ENCODE measurements at regions of chr2 and their contacts with region 1.

Region 1: GRCh38 chr2:72887754-72888437 is 688 bp downstream of the SPR start:
- DNase-seq: peak; percentile 83
- H3K4me3 ChIP-seq: peak overlapping the region; percentile 66 to 79 (median 75)
- H3K27ac ChIP-seq: no peak overlapping the region
- H3K4me1 ChIP-seq: peaks cover 13% of the 10 kb centered on the region
- H3K27me3 ChIP-seq: no peaks in the 10 kb centered on the region
- CTCF ChIP-seq: peak; percentile 95 to 97

Region 2: DNA sequence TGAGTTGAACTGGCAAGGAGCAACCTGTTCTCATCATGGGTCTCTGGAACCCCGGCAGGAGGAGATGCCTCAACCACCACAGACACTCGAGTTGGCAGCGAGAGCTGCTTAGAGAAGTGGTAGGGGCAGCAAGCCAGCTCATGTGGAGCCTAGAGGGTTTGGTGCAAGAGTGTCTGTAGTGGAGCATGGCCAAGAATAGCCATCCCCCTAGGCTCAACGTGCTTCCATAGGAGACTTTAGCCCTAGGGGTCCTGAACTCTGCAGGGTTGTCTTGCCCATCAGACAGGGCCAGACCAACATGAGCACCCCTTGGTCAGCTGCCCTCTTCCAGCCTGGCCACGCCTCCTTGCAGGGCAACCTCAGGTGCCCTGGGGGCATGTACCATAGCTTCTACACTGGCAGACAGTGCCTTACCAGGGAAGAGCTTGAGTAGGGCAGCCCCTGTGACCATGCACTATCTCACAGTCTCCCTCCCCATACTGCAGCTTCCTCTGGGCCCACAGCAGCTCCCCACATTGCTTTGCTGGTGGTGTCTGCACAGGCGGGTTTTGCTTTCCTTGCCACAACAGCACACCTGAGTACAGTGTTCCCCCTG is 249.2 kb before region 1 on chr2:
- CTCF ChIA-PET with region 1: no interaction called
- dilution Hi-C with region 1: no loop called
- in situ Hi-C with region 1: no loop called
- intact Hi-C with region 1: no loop called
- DNase-seq: no peak
- H3K4me3 ChIP-seq: no peak overlapping the region
- H3K27ac ChIP-seq: no peak overlapping the region
- H3K4me1 ChIP-seq: no peaks in the 10 kb centered on the region
- H3K27me3 ChIP-seq: no peaks in the 10 kb centered on the region
- CTCF ChIP-seq: no peak

Region 3: GRCh38 chr2:72770879-72771461 is 116.9 kb before region 1 on chr2:
- CTCF ChIA-PET with region 1: interaction called, 5 read pairs
- dilution Hi-C with region 1: no loop called
- in situ Hi-C with region 1: no loop called
- intact Hi-C with region 1: loop called (anchors 1 kb)
- DNase-seq: peak; percentile 60
- H3K4me3 ChIP-seq: no peak overlapping the region
- H3K27ac ChIP-seq: no peak overlapping the region
- H3K4me1 ChIP-seq: peaks cover 6% of the 10 kb centered on the region
- H3K27me3 ChIP-seq: no peaks in the 10 kb centered on the region
- CTCF ChIP-seq: peak; percentile 74 to 82

Region 4: GRCh38 chr2:72915907-72916742 is 28.2 kb after region 1 on chr2:
- CTCF ChIA-PET with region 1: no interaction called
- dilution Hi-C with region 1: no loop called
- in situ Hi-C with region 1: no loop called
- intact Hi-C with region 1: loop called (anchors 2 kb)
- DNase-seq: peak; percentile 57
- H3K4me3 ChIP-seq: peak overlapping the region; percentile 27 to 37 (median 31)
- H3K27ac ChIP-seq: no peak overlapping the region
- H3K4me1 ChIP-seq: peaks cover 38% of the 10 kb centered on the region
- H3K27me3 ChIP-seq: peaks cover 74% of the 10 kb centered on the region
- CTCF ChIP-seq: no peak

Region 5: DNA sequence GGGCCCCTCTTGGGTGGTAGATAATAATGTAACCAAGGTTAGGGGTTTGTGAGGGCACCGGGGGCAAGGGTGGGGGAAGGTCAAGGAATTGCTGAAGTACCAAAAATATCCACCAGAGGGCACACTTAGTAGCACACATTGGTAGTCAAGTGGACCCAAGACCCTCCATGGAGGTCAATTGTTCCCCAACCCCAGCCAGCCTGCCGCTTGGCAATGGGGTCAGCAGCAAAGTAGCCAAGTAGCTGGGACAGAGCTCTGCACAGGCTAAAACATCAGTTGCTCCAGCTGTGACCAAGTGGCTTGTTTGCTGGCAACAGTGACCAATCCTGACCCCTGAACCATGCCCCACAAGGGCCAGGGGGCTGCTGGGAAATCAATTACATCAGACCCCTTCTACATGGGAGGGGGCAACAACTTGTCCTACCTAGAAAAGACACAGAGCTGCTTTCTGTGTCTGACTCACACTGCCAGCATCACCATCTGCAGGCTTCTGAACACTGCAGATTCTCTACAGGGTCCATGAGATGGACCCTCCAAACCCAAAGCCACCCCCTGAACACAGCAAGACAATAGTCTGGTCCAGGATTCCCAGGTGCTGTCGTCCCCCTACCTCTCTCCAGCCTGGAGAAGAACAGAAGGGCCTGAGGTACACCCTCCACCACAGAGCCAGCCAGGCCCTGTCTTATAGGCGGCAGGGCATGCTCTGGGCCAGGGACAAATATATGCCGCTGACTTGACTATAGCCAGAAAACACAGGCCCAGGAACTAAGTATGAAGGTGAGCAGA is 105.4 kb after region 1 on chr2:
- CTCF ChIA-PET with region 1: no interaction called
- dilution Hi-C with region 1: no loop called
- in situ Hi-C with region 1: no loop called
- intact Hi-C with region 1: loop called (anchors 5 kb)
- DNase-seq: no peak
- H3K4me3 ChIP-seq: no peak overlapping the region
- H3K27ac ChIP-seq: no peak overlapping the region
- H3K4me1 ChIP-seq: no peaks in the 10 kb centered on the region
- H3K27me3 ChIP-seq: no peaks in the 10 kb centered on the region
- CTCF ChIP-seq: peak; percentile 70 to 73

Region 6: GRCh38 chr2:73156539-73157124 is 268.7 kb after region 1 on chr2:
- CTCF ChIA-PET with region 1: interaction called, 3 read pairs
- dilution Hi-C with region 1: no loop called
- in situ Hi-C with region 1: loop called in 1 of 2 experiments (anchors 10 kb)
- intact Hi-C with region 1: loop called (anchors 1 kb)
- DNase-seq: peak; percentile 24
- H3K4me3 ChIP-seq: peak overlapping the region in 1 of 3 experiments; percentile 36
- H3K27ac ChIP-seq: no peak overlapping the region
- H3K4me1 ChIP-seq: no peaks in the 10 kb centered on the region
- H3K27me3 ChIP-seq: no peaks in the 10 kb centered on the region
- CTCF ChIP-seq: peak; percentile 76 to 86

Region 7: GRCh38 chr2:73260034-73260984 is 372.4 kb after region 1 on chr2:
- CTCF ChIA-PET with region 1: no interaction called
- dilution Hi-C with region 1: no loop called
- in situ Hi-C with region 1: no loop called
- intact Hi-C with region 1: loop called (anchors 5 kb)
- DNase-seq: peak; percentile 39
- H3K4me3 ChIP-seq: no peak overlapping the region
- H3K27ac ChIP-seq: no peak overlapping the region
- H3K4me1 ChIP-seq: peaks cover 7% of the 10 kb centered on the region
- H3K27me3 ChIP-seq: no peaks in the 10 kb centered on the region
- CTCF ChIP-seq: peak; percentile 45 to 70